GM10248 (cell line): ENCODE measurements at regions of chr9 and their contacts with region 1.

Region 1: DNA sequence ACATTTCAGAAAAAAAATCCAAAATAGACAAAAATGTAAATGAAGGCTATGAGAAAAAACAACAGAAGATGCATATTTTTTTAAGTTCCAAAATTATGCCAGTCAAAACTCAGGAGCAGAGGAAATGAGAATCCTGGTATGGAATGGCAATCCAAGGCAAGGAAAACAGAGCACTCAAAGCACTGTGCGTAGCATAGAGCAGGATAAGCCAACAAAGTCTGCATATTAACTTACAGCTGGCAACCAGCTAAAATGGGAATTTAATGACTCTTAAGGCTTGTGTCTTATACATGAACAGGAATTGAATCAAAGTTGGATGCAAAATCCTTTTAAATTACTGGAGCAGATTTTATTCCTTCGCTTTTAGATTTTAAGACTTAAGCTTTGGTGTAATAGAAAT is 203.5 kb upstream of the DAPK1 start:
- DNase-seq: no peak
- CTCF ChIP-seq: no peak

Region 2: DNA sequence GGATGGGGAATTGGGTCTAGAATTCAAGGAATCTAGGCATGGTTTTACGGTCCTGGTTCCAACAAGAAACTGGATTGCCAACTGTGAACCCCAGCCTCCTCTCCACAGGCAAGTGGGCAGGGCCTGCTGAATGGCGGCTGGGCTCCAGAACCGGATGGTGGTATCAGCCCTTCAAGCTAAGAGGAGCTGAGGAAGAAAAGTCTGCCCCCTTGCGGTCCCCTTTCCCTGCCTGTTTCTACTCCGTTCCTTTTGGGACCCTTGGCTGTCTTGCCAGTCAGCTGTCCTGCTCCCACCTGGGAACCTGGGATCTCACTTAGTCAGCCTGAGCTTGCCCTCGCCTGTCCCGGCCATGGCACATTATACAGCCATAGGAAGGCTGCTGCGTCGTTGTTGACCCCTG is 30.8 kb before region 1 on chr9:
- CTCF ChIA-PET with region 1: no interaction called
- POLR2A ChIA-PET with region 1: no interaction called
- DNase-seq: no peak
- CTCF ChIP-seq: no peak

Region 3: GRCh38 chr9:87276851-87277261 is 17.3 kb before region 1 on chr9:
- CTCF ChIA-PET with region 1: no interaction called
- POLR2A ChIA-PET with region 1: no interaction called
- DNase-seq: no peak
- CTCF ChIP-seq: no peak

Region 4: GRCh38 chr9:87309236-87309635 is 15.1 kb after region 1 on chr9:
- CTCF ChIA-PET with region 1: interaction called, 11 read pairs
- POLR2A ChIA-PET with region 1: no interaction called
- DNase-seq: no peak
- CTCF ChIP-seq: no peak